ENCODE measurements at regions of chr10 and their contacts with region 1.

Region 1: DNA sequence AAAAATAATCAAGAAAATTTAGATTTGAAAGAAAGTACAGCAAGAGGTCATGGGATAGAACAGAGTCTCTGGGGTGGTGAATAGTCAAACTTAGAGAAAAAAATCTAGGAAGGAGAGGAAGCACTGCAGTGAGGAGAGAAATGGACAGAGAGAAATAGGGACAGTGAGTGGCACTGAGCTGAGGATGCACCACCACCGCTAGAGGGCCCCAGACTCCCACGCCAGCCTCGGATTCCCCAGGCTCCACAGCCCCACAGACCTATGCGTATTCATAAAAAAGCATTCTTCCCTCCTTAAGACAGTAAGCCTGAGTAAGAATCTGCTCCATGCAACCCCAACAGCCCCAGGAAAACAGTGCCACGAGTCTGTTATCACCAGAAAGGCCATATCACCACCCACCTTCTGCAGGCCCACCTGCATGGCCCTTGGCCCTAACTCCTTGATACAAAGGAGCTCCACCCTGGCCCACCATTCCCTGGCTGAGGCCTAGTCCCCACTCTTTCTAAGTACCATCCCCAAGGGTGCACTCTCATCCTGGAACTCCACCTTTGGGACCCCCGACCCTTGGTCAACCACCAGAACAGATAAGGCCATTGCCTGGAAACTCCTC is 91.0 kb downstream of the ALOX5 start:
- DNase-seq: peak; percentile 70
- ATAC-seq: peak; percentile 68
- H3K4me3 Mint-ChIP-seq: peak overlapping the region; percentile 45
- H3K27ac Mint-ChIP-seq: peak overlapping the region; percentile 98
- H3K4me1 Mint-ChIP-seq: peaks cover 90% of the 10 kb centered on the region
- H3K27me3 Mint-ChIP-seq: no peaks in the 10 kb centered on the region
- CTCF ChIP-seq: peak; percentile 60

Region 2: GRCh38 chr10:45249978-45250693 is 214.9 kb before region 1 on chr10:
- CTCF ChIA-PET with region 1: interaction called, 25 read pairs
- POLR2A ChIA-PET with region 1: interaction called, 26 read pairs
- intact Hi-C with region 1: loop called (anchors 1 kb)
- DNase-seq: peak; percentile 42
- ATAC-seq: peak; percentile 84
- H3K4me3 Mint-ChIP-seq: peak overlapping the region; percentile 85
- H3K27ac Mint-ChIP-seq: peak overlapping the region; percentile 91
- H3K4me1 Mint-ChIP-seq: peaks cover 26% of the 10 kb centered on the region
- H3K27me3 Mint-ChIP-seq: peaks cover 2% of the 10 kb centered on the region
- CTCF ChIP-seq: peak; percentile 81

Region 3: GRCh38 chr10:45420453-45421192 is 44.4 kb before region 1 on chr10:
- CTCF ChIA-PET with region 1: interaction called, 13 read pairs
- POLR2A ChIA-PET with region 1: interaction called, 92 read pairs
- intact Hi-C with region 1: loop called (anchors 1 kb)
- DNase-seq: peak; percentile 50
- ATAC-seq: peak; percentile 56
- H3K4me3 Mint-ChIP-seq: peak overlapping the region; percentile 95
- H3K27ac Mint-ChIP-seq: peak overlapping the region; percentile 97
- H3K4me1 Mint-ChIP-seq: peaks cover 65% of the 10 kb centered on the region
- H3K27me3 Mint-ChIP-seq: no peaks in the 10 kb centered on the region
- CTCF ChIP-seq: no peak

Region 4: GRCh38 chr10:45580371-45581215 is 115.5 kb after region 1 on chr10:
- CTCF ChIA-PET with region 1: interaction called, 5 read pairs
- POLR2A ChIA-PET with region 1: interaction called, 12 read pairs
- intact Hi-C with region 1: no loop called
- DNase-seq: peak; percentile 20
- ATAC-seq: peak; percentile 82
- H3K4me3 Mint-ChIP-seq: peak overlapping the region; percentile 89
- H3K27ac Mint-ChIP-seq: peak overlapping the region; percentile 97
- H3K4me1 Mint-ChIP-seq: peaks cover 33% of the 10 kb centered on the region
- H3K27me3 Mint-ChIP-seq: no peaks in the 10 kb centered on the region
- CTCF ChIP-seq: no peak

Region 5: DNA sequence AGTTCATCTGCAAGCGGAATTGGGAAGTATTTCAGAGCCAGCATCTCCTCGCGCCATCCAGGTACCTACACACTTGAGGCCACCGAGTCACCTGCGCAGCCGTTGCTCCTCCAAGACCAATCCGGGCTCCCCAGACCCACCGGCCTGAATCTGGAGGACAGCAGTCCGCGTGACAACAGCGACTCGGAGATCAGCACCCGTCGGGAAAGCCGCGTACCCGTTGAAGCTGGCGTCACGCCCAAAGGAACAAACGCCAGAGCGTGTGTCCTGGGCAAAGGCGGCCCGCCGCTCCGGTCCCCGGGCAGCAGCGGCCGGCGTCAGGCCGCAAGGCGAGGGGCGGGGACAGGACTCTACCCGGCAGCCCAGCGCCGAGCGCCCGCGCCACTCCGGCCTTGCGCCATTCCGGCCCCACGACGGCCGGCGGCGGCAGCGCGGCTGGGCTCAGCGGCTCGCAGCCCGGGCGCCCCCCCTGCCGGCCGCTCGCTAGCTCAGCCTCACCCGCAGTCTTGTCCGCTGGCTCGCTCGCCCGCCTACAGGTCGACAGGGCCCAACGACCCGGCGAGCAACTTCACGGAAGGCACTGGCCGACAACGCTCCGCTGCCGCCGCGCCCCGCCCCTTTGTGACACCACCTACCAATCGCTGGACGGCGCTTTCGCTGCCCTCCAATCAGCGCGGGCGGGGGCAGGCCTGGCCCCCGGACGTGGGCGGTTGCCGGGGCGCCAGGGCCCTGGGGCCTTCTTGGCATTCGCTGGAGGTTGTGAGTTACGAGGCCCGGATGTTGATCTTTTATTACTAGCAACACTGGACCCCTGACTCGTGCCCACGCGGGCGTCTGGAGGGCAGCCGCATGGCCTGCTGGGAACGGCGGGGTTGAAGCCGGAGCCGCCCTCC is 207.4 kb after region 1 on chr10 and contains the start of gene ZFAND4:
- CTCF ChIA-PET with region 1: interaction called, 48 read pairs
- POLR2A ChIA-PET with region 1: interaction called, 17 read pairs
- intact Hi-C with region 1: loop called (anchors 1 kb)
- DNase-seq: peak; percentile 92
- ATAC-seq: peak; percentile 95
- H3K4me3 Mint-ChIP-seq: peak within 1 kb of the TSS; percentile 87
- H3K27ac Mint-ChIP-seq: peak within 1 kb of the TSS; percentile 89
- H3K4me1 Mint-ChIP-seq: peaks cover 28% of the 10 kb centered on the region
- H3K27me3 Mint-ChIP-seq: no peaks in the 10 kb centered on the region
- CTCF ChIP-seq: no peak
- total RNA-seq, gene ZFAND4: 19.8 and 22.1 TPM in 2 replicates

Region 6: GRCh38 chr10:46541017-46541661 is 1076.1 kb after region 1 on chr10:
- CTCF ChIA-PET with region 1: no interaction called
- POLR2A ChIA-PET with region 1: no interaction called
- intact Hi-C with region 1: no loop called
- DNase-seq: peak; percentile 10
- ATAC-seq: no peak
- H3K4me3 Mint-ChIP-seq: no peak overlapping the region
- H3K27ac Mint-ChIP-seq: no peak overlapping the region
- H3K4me1 Mint-ChIP-seq: no peaks in the 10 kb centered on the region
- H3K27me3 Mint-ChIP-seq: peaks cover 54% of the 10 kb centered on the region
- CTCF ChIP-seq: no peak